ENCODE measurements at regions of chr3 and their contacts with region 1.

Region 1: DNA sequence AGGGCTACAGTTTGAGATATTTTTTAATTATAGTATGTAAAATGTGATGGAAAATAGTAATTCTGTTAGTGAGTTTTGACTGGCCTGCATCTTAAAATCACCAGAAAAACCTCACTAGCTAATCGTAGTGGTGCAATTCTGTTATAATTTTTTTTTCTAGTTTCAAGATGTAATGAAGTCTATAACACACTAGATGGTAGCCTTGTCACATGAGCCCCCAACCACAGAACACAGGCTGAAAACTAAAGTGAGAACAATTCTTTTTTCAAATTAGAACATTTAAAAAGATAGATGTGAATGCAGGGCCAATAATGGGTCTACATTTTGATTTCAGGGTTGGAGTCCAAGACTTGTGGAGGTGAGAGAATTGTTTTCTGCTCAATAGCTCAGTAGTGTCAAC is 83.3 kb upstream of the KCNH8 start:
- DNase-seq: peak; percentile 36
- H3K4me3 Mint-ChIP-seq: no peak overlapping the region
- H3K27ac Mint-ChIP-seq: no peak overlapping the region
- H3K4me1 Mint-ChIP-seq: no peaks in the 10 kb centered on the region
- H3K27me3 Mint-ChIP-seq: peaks cover 13% of the 10 kb centered on the region
- CTCF ChIP-seq: peak; percentile 58

Region 2: DNA sequence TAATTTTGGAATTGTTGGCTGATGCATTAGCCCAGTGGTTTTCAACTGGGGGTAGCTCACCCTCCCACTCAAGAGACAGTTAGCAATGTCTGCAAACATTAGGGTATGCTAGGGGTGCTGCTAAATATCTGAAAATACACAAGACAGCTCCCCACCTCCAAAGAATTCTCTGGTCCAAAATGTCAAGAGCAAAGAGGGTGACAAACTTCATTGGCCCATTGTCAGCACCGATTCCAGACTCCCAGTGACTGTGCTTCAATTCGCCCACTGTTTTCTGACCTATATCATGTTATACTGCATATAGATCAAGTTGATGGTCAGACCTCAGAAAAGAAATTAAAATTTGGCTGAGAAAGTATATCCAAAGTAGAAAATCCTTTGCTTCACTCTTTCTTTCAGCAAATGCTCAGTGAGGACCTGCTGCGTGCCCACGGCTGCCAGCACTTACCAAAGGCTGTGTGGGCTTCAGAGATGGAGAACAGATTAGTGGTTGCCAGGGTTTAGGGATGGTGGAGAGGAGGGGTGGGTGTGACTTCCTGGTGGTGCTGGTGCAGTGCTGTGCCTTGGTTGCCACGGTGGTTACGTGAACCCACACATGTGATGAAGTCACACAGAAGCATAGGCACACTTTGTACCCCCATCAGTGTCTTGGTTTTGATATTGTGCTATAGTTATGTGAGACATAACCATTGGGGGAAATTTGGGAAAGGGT is 1976.3 kb before region 1 on chr3:
- CTCF ChIA-PET with region 1: no interaction called
- POLR2A ChIA-PET with region 1: no interaction called
- intact Hi-C with region 1: no loop called
- DNase-seq: no peak
- H3K4me3 Mint-ChIP-seq: no peak overlapping the region
- H3K27ac Mint-ChIP-seq: no peak overlapping the region
- H3K4me1 Mint-ChIP-seq: no peaks in the 10 kb centered on the region
- H3K27me3 Mint-ChIP-seq: no peaks in the 10 kb centered on the region
- CTCF ChIP-seq: no peak

Region 3: GRCh38 chr3:19139862-19140261 is 74.8 kb after region 1 on chr3:
- CTCF ChIA-PET with region 1: no interaction called
- POLR2A ChIA-PET with region 1: no interaction called
- intact Hi-C with region 1: no loop called
- DNase-seq: no peak
- H3K4me3 Mint-ChIP-seq: no peak overlapping the region
- H3K27ac Mint-ChIP-seq: no peak overlapping the region
- H3K4me1 Mint-ChIP-seq: no peaks in the 10 kb centered on the region
- H3K27me3 Mint-ChIP-seq: peaks cover 30% of the 10 kb centered on the region
- CTCF ChIP-seq: no peak

Region 4: DNA sequence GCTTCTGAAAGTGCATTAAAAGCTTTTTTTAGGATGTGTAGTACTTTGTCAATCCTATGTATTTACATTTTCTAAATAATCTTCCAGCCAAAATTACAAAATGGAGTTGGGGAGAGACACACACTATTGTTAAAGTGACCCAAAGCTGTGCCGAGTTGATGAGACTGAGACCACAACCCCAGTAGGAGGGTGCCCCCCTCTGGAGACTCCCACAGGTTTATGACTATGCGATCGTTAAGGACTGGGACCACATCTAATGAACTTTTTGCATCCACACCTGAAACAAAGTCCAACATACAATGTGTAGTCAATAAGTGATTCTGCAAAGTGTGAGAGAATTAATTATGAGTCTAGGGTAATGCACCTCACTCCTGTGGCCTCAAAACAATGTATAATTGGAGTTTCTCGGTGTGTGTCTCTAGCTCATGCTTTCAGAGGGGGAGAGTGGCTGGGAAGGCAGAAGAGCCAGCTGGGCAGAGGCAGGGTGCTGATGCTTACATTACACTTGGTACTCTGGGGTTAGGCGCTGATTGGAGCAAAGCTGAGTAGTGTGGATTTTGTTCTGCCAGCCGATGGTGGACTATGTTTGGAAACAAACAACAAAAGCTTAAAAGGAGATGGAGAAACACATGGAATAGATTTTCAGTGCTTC is 186.1 kb after region 1 on chr3:
- CTCF ChIA-PET with region 1: interaction called, 11 read pairs
- POLR2A ChIA-PET with region 1: no interaction called
- intact Hi-C with region 1: loop called (anchors 5 kb)
- DNase-seq: no peak
- H3K4me3 Mint-ChIP-seq: no peak overlapping the region
- H3K27ac Mint-ChIP-seq: no peak overlapping the region
- H3K4me1 Mint-ChIP-seq: no peaks in the 10 kb centered on the region
- H3K27me3 Mint-ChIP-seq: peaks cover 11% of the 10 kb centered on the region
- CTCF ChIP-seq: no peak

Region 5: GRCh38 chr3:19256313-19256712 is 191.3 kb after region 1 on chr3:
- CTCF ChIA-PET with region 1: interaction called, 11 read pairs
- POLR2A ChIA-PET with region 1: no interaction called
- intact Hi-C with region 1: loop called (anchors 5 kb)
- DNase-seq: no peak
- H3K4me3 Mint-ChIP-seq: no peak overlapping the region
- H3K27ac Mint-ChIP-seq: no peak overlapping the region
- H3K4me1 Mint-ChIP-seq: no peaks in the 10 kb centered on the region
- H3K27me3 Mint-ChIP-seq: peaks cover 18% of the 10 kb centered on the region
- CTCF ChIP-seq: no peak

Region 6: GRCh38 chr3:19348929-19349564 is 284.0 kb after region 1 on chr3:
- CTCF ChIA-PET with region 1: interaction called, 15 read pairs
- POLR2A ChIA-PET with region 1: no interaction called
- intact Hi-C with region 1: loop called (anchors 5 kb)
- DNase-seq: peak; percentile 41
- H3K4me3 Mint-ChIP-seq: no peak overlapping the region
- H3K27ac Mint-ChIP-seq: no peak overlapping the region
- H3K4me1 Mint-ChIP-seq: no peaks in the 10 kb centered on the region
- H3K27me3 Mint-ChIP-seq: peaks cover 65% of the 10 kb centered on the region
- CTCF ChIP-seq: peak; percentile 82

Region 7: GRCh38 chr3:19543212-19543841 is 478.3 kb after region 1 on chr3:
- CTCF ChIA-PET with region 1: interaction called, 4 read pairs
- POLR2A ChIA-PET with region 1: no interaction called
- intact Hi-C with region 1: loop called (anchors 1 kb)
- DNase-seq: peak; percentile 55
- H3K4me3 Mint-ChIP-seq: no peak overlapping the region
- H3K27ac Mint-ChIP-seq: no peak overlapping the region
- H3K4me1 Mint-ChIP-seq: no peaks in the 10 kb centered on the region
- H3K27me3 Mint-ChIP-seq: peaks cover 35% of the 10 kb centered on the region
- CTCF ChIP-seq: peak; percentile 64

Region 8: DNA sequence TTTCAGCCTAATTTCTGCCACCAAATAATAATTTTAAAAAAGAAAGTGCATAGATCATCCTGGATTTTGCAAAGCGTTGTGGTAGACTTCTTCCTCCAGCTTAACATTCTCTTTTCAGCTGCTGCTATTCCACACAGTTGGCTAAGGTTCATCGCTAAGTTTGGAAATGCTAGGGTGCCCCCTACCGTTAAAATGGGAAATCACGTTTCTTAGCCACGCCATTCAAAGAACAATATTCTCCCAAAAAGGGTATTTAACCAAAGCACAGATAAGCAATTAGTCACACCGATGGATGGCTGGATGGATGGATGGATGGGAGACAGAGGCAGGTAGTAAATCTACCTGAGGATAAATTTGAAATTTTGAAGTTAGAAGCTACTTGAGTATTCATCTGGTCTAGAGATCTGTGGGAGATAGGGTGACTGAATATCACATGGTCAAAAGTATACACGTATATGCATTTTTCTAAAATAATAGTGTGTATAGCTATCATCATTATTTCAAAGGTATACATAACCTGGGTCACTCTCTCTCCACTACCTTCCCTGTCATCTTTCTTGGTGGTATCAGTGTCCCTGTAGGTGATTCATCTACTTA is 801.8 kb after region 1 on chr3:
- CTCF ChIA-PET with region 1: interaction called, 17 read pairs
- POLR2A ChIA-PET with region 1: no interaction called
- intact Hi-C with region 1: no loop called
- DNase-seq: peak; percentile 75
- H3K4me3 Mint-ChIP-seq: no peak overlapping the region
- H3K27ac Mint-ChIP-seq: no peak overlapping the region
- H3K4me1 Mint-ChIP-seq: no peaks in the 10 kb centered on the region
- H3K27me3 Mint-ChIP-seq: peaks cover 27% of the 10 kb centered on the region
- CTCF ChIP-seq: peak; percentile 68